ENCODE measurements at regions of chr10 and their contacts with region 1.

Region 1: DNA sequence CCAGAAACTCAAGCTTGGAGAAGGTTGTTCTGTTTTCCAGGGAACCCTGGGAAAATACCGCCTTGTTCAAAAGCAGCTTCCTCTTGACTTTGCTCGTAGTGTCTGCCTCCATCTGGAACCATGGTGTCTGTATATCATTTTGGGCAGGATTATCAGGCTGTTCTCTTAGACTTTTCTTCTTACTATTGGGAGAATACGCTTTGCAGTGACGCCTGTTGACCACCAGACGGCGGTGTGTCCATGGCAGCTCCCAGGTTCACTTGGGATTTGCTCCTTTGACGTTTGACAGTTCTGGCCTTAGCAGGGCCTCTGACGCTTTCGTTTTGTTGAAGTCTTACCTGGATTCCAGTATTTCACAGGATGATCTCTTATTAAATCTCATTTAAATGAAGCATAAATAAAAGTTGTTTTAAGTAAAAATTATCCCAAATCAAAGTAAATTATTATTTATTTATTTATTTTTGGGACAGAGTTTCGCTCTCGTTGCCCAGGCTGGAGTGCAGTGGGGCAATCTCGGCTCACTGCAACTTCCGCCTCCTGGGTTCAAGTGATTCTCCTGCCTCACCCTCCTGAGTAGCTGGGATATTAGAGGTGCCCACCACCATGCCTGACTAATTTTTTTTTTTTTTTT is 41.8 kb upstream of the GJD4 start:
- DNase-seq: peak; percentile 66
- ATAC-seq: peak; percentile 74
- H3K4me3 Mint-ChIP-seq: no peak overlapping the region
- H3K27ac Mint-ChIP-seq: no peak overlapping the region
- H3K4me1 Mint-ChIP-seq: peaks cover 3% of the 10 kb centered on the region; the same call in 1 of the 2 replicates
- H3K27me3 Mint-ChIP-seq: no peaks in the 10 kb centered on the region
- CTCF ChIP-seq: peak; percentile 98

Region 2: GRCh38 chr10:35523670-35524225 is 39.6 kb before region 1 on chr10:
- CTCF ChIA-PET with region 1: interaction called, 10 read pairs
- POLR2A ChIA-PET with region 1: no interaction called
- DNase-seq: no peak
- ATAC-seq: no peak
- H3K4me3 Mint-ChIP-seq: no peak overlapping the region
- H3K27ac Mint-ChIP-seq: no peak overlapping the region
- H3K4me1 Mint-ChIP-seq: peaks cover 51% of the 10 kb centered on the region
- H3K27me3 Mint-ChIP-seq: no peaks in the 10 kb centered on the region
- CTCF ChIP-seq: no peak

Region 3: DNA sequence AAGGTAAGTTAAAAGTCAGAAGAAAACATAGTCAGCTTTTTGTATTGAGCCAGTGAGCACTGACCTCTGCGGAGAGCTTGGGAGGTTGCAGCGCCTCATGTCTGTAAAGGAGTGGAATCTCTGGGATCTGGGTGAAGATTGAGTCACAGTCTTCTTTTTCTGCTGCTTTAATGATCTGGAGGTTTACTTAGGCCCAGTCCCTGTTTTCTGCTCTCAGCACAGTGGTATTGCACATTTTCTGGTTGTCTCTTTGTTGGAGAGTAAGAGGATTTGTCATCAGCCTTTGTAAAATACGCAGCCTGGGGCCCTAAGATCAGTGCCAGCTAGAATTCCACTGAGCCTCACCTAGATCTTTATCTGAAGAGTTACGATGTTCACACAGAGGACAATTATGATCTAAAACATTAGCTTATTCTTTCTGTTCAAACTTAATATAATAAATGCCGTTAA is 16.5 kb before region 1 on chr10:
- CTCF ChIA-PET with region 1: interaction called, 12 read pairs
- POLR2A ChIA-PET with region 1: no interaction called
- DNase-seq: no peak
- ATAC-seq: no peak; the same call in 1 of the 2 replicates
- H3K4me3 Mint-ChIP-seq: no peak overlapping the region
- H3K27ac Mint-ChIP-seq: no peak overlapping the region
- H3K4me1 Mint-ChIP-seq: no peaks in the 10 kb centered on the region
- H3K27me3 Mint-ChIP-seq: no peaks in the 10 kb centered on the region
- CTCF ChIP-seq: no peak

Region 4: DNA sequence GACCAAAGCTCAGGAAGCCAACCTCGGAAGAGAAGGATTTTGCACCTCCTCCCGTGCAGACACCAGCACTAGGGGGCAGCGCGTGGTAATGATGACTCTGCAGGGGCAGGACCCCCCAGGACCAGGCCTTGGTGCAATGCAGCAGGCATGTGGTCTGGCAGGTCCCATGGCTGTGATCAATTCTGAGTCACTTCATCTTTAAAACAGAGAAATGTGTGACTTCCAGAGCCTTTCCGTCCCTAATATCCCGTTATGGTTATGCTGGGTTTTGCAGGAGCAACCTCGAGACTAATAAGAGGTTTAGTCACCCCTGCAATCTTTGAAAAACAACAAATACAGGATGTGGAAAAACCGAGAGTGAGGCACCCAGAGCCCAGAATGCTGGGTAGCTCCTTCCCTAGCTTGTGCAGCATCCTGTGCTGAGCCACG is 11.6 kb after region 1 on chr10:
- CTCF ChIA-PET with region 1: interaction called, 19 read pairs
- POLR2A ChIA-PET with region 1: no interaction called
- DNase-seq: peak; percentile 55
- ATAC-seq: peak; percentile 73
- H3K4me3 Mint-ChIP-seq: no peak overlapping the region
- H3K27ac Mint-ChIP-seq: no peak overlapping the region
- H3K4me1 Mint-ChIP-seq: peaks cover 14% of the 10 kb centered on the region
- H3K27me3 Mint-ChIP-seq: no peaks in the 10 kb centered on the region
- CTCF ChIP-seq: no peak; the same call in 1 of the 2 replicates

Region 5: DNA sequence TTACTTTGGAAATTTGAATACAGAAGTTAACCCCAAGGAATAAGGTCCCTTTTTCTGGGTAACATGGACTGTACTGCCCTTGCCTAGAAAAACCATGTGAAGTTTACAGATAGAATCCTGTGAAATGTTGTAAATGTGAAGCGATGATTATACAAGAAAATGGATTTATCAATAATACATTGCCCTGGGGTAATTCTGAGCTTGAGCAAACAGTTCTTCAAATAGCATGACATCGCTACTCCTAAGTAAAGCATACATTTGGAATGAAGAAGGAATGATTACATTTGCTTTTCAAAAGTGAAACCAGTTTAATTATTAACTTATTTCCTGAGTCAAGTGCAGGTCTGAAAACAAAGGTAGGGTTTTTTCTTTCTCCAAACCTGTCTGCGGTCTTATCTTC is 122.0 kb after region 1 on chr10:
- CTCF ChIA-PET with region 1: no interaction called
- POLR2A ChIA-PET with region 1: no interaction called
- DNase-seq: no peak
- ATAC-seq: no peak
- H3K4me3 Mint-ChIP-seq: no peak overlapping the region
- H3K27ac Mint-ChIP-seq: no peak overlapping the region
- H3K4me1 Mint-ChIP-seq: peaks cover 41% of the 10 kb centered on the region
- H3K27me3 Mint-ChIP-seq: peaks cover 8% of the 10 kb centered on the region
- CTCF ChIP-seq: no peak

Region 6: GRCh38 chr10:35743851-35744250 is 180.5 kb after region 1 on chr10:
- CTCF ChIA-PET with region 1: no interaction called
- POLR2A ChIA-PET with region 1: no interaction called
- DNase-seq: no peak
- ATAC-seq: no peak
- H3K4me3 Mint-ChIP-seq: no peak overlapping the region
- H3K27ac Mint-ChIP-seq: no peak overlapping the region
- H3K4me1 Mint-ChIP-seq: peaks cover 6% of the 10 kb centered on the region; the same call in 1 of the 2 replicates
- H3K27me3 Mint-ChIP-seq: no peaks in the 10 kb centered on the region
- CTCF ChIP-seq: no peak